ENCODE measurements at regions of chr7 and their contacts with region 1.

Region 1: GRCh38 chr7:123635551-123636359 is 19.9 kb upstream of the LMOD2 start:
- DNase-seq: no peak
- ATAC-seq: 0 out of 3 replicates have a peak, but pooled peaks have one; percentile 49
- H3K4me3 ChIP-seq: no peak overlapping the region
- H3K27ac ChIP-seq: no peak overlapping the region
- H3K4me1 ChIP-seq: no peaks in the 10 kb centered on the region
- H3K27me3 ChIP-seq: no peaks in the 10 kb centered on the region
- CTCF ChIP-seq: peak; percentile 35 to 43 (median 40); a peak in 5 of 6 replicates
- EP300 ChIP-seq: no peak
- POLR2A ChIP-seq: no peak
- RAD21 ChIP-seq: peak; percentile 67

Region 2: DNA sequence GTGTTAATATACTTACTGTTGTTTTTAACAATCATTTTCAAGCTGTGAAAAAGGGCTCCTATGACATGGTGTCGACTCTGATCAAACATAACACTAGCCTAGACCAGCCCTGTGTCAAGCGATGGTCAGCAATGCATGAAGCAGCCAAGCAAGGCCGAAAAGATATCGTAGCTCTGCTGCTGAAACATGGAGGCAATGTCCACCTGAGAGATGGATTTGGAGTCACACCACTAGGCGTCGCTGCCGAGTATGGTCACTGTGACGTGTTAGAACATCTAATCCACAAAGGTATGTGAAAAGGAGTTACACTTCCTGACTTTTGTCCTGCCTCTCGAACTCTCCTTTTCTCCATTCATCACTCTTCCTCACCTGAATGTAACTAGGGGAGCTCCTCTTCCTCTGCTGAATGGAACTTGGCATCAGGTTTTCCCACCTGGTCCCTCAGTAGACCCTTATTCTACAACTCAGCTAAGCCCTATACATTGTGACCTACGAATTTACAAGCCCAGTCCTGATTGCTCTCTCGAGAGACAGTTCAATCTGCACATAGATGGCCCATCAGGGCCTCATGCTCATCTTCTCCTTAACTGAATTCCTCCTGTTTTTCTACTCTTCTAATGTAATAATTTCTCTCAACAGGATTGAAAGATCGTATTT is 11.1 kb before region 1 on chr7:
- CTCF ChIA-PET with region 1: interaction called, 25 read pairs
- POLR2A ChIA-PET with region 1: no interaction called
- RAD21 ChIA-PET with region 1: no interaction called
- SMC1A ChIA-PET with region 1: interaction called, 4 read pairs
- in situ Hi-C with region 1: no loop called
- intact Hi-C with region 1: no loop called
- DNase-seq: peak; percentile 25
- ATAC-seq: peak; percentile 97
- H3K4me3 ChIP-seq: no peak overlapping the region
- H3K27ac ChIP-seq: no peak overlapping the region
- H3K4me1 ChIP-seq: no peaks in the 10 kb centered on the region
- H3K27me3 ChIP-seq: no peaks in the 10 kb centered on the region
- CTCF ChIP-seq: peak; percentile 68 to 94 (median 91)
- EP300 ChIP-seq: no peak
- POLR2A ChIP-seq: no peak
- RAD21 ChIP-seq: peak; percentile 40

Measured in GM12878 (cell line).